ENCODE measurements at regions of chr20 and their contacts with region 1.

Region 1: GRCh38 chr20:57346477-57346876 is 4.6 kb upstream of the RAE1 start:
- DNase-seq: peak; percentile 92
- ATAC-seq: peak; percentile 67

Region 2: DNA sequence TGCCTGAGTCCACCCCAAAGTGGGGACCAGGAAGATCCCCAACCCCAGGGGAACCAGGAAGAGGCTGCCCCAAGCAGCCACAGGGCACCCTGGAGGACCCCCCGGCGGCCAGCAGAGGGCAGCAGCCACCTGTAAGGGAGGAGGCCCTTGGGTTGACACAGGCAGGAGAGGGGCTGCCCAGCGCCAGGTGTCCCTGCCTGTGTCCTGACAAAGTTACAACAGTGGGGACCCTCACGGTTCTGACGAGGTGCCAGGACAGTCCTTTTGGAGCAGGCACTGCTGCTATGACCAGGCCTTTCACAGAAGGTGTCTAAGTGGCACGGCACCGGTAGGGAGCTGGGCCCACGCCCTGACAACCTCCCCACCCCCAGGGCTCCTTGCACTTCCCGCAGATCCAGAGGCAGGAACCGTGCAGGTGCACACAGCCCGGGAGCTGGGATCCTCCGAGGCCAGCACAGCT is 256.8 kb before region 1 on chr20:
- intact Hi-C with region 1: loop called (anchors 5 kb)
- DNase-seq: peak; percentile 89
- ATAC-seq: peak; percentile 83

Region 3: GRCh38 chr20:57167971-57168706 is 178.3 kb before region 1 on chr20:
- intact Hi-C with region 1: no loop called
- DNase-seq: no peak
- ATAC-seq: peak; percentile 61

Region 4: DNA sequence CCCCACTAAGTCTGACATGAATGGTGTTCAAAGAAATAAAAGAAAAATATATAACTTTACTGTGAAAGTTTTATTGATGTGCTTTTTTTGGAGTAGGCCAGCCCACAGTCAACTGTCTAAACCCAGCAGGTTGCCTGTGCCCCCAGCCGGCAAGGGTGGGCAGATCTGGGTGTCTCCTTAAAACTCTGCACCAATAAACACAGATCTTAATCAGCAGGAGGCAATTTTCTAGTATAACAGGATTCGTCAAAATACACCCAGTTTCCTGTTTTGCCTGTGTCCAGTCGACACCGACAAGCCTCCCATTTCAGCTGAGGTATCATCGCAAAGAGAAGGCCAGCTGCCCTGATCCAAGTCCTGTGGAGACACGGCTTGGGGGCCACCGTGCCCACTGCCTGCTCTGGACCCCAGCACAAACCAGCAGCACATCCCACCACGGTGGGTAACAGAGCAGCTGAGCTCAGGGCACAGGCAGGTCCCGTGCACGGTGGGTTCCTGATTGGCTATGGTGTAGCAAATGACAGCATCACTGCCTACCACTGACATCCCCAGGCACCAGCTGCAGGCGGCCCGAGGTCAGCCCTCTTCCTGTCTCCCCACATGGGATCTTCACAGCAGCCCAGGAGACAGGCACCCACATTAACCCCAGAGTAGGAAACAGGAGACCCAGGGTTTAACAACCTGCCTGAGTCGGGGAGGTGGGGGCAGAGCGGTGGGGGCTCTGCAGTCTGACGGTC is 95.7 kb before region 1 on chr20:
- intact Hi-C with region 1: no loop called
- DNase-seq: no peak
- ATAC-seq: peak; percentile 39

Region 5: GRCh38 chr20:57473246-57474048 is 127.0 kb after region 1 on chr20:
- intact Hi-C with region 1: no loop called
- DNase-seq: peak; percentile 53
- ATAC-seq: peak; percentile 59